ENCODE measurements at regions of chr1 and their contacts with region 1.

Region 1: GRCh38 chr1:64469977-64470664 is at the start of gene CACHD1:
- DNase-seq: peak; percentile 90
- ATAC-seq: peak; percentile 85
- total RNA-seq, gene CACHD1: 4.9 TPM

Region 2: GRCh38 chr1:64337475-64337874 is 132.6 kb before region 1 on chr1:
- intact Hi-C with region 1: no loop called
- DNase-seq: no peak
- ATAC-seq: no peak

Region 3: GRCh38 chr1:64539781-64540218 is 69.7 kb after region 1 on chr1:
- intact Hi-C with region 1: loop called (anchors 2 kb)
- DNase-seq: peak; percentile 80
- ATAC-seq: peak; percentile 55

Region 4: DNA sequence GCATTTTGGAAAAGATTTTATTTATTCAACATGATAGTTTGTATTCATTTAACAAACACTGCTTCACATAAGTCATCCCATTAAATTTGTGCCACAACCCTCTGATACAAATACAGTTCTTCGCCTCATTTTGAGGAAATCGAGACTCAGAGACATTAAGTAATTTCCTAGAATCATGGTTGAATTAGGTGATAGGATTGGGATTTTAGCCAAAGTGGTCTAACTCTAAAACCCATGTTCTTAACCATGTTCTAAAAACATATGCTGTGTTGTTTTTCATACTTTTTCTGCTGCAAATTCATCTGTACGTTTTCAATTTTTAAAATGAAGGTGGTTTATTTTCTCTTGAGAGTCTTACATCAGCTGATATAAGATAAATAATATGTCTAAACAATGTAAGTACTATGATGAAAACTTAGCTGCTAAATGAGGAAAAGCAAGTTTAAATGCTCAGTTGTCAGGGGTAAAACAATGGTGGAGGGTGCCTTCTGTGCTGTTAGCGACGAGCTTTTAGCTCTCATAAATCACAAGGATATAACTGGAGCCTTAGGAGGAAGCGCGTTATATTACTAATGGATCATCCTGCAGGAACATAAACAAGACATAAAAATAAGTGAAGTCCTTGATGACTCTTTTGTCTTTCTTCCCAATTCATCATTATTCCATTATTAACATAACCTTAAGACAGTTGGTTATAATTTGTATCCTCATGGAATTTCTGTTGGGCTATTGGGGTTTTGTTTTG is 97.5 kb after region 1 on chr1:
- intact Hi-C with region 1: no loop called
- DNase-seq: no peak
- ATAC-seq: no peak

Region 5: DNA sequence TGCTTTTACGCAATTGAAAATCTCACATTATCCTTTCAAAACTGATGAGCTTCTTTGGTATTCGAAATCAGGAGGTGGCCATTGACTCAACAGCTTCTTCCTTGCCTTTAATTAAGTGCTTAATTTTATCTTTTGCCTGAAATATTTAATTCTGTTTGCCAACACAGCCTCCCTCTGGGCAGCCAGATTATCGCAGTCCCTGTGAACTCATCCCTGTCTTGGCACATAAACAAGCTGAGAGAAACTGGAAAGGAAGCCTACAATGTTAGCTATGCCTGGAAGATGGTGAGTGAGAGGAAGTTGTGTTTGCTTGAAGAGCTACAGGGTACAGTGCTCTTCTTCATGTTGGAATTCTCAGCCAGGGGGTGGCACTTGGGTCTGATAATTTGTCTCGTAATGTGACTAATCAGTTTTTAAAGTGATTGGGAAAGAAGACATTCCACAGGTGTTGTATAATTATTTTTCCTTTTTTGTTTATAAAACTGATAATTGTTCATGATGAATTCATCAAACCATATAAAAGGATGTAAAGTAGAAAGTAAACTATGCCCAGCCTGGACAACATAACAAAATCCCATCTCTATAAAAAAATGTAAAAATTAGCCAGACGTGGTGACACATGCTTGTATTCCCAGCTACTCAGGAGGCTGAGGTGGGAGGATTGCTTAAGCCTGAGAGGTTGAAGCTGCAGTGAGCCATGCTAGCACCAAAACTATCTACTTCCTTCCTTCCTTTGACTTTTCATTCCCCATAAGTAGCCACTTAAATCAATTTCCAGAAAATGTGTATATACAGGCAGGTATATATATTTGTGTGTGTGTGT is 184.6 kb after region 1 on chr1:
- intact Hi-C with region 1: loop called (anchors 5 kb)
- DNase-seq: no peak
- ATAC-seq: peak; percentile 56

Region 6: GRCh38 chr1:65332821-65333220 is 862.7 kb after region 1 on chr1:
- intact Hi-C with region 1: no loop called
- DNase-seq: no peak
- ATAC-seq: no peak